GM10248 (cell line): ENCODE measurements at regions of chrX and their contacts with region 1.

Region 1: GRCh38 chrX:133792198-133792953 is 193.0 kb downstream of the GPC3 start:
- DNase-seq: peak; percentile 57
- CTCF ChIP-seq: peak; percentile 84

Region 2: GRCh38 chrX:133670383-133670782 is 122.0 kb before region 1 on chrX:
- CTCF ChIA-PET with region 1: no interaction called
- POLR2A ChIA-PET with region 1: no interaction called
- DNase-seq: peak; percentile 34
- CTCF ChIP-seq: peak; percentile 48

Region 3: GRCh38 chrX:133921764-133922389 is 129.5 kb after region 1 on chrX:
- CTCF ChIA-PET with region 1: interaction called, 27 read pairs
- POLR2A ChIA-PET with region 1: no interaction called
- DNase-seq: peak; percentile 31
- CTCF ChIP-seq: peak; percentile 40

Region 4: GRCh38 chrX:134026565-134027311 is 234.4 kb after region 1 on chrX:
- CTCF ChIA-PET with region 1: interaction called, 12 read pairs
- POLR2A ChIA-PET with region 1: no interaction called
- DNase-seq: peak; percentile 11
- CTCF ChIP-seq: peak; percentile 11